Breast epithelium (tissue), 4 donors: ENCODE measurements at regions of chrX and their contacts with region 1.

Region 1: GRCh38 chrX:25383196-25383595 is 367.4 kb upstream of the ARX start:
- DNase-seq: no peak
- H3K4me3 ChIP-seq: no peak overlapping the region
- H3K27ac ChIP-seq: no peak overlapping the region
- H3K4me1 ChIP-seq: no peaks in the 10 kb centered on the region
- H3K27me3 ChIP-seq: peaks cover 0 to 7% of the 10 kb centered on the region in 2 donors
- CTCF ChIP-seq: no peak
- POLR2A ChIP-seq: no peak

Region 2: DNA sequence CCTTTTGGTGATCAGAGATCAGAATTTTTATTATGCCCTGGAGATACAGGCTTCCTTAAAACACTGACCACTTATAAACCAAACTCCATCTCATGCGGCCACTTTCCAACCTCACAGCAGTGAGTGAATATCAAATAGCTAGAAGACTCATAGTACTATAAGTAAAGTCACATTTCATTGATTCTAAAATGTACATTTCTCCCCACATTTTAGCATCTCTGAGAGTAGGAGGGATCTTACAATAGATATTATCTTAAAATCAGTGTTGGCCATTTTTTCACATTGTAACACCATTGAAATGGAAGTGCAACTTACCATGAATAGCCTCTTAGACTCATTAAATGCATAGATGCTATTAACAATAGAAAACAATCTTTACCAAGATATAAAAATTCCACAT is 753.5 kb before region 1 on chrX:
- intact Hi-C with region 1: loop called (anchors 10 kb)
- DNase-seq: no peak
- H3K4me3 ChIP-seq: no peak overlapping the region
- H3K27ac ChIP-seq: no peak overlapping the region
- H3K4me1 ChIP-seq: no peaks in the 10 kb centered on the region
- H3K27me3 ChIP-seq: peaks cover 0 to 18% of the 10 kb centered on the region in 2 donors
- CTCF ChIP-seq: no peak
- POLR2A ChIP-seq: no peak

Region 3: GRCh38 chrX:25427873-25428555 is 44.8 kb after region 1 on chrX:
- intact Hi-C with region 1: no loop called
- DNase-seq: no peak
- H3K4me3 ChIP-seq: no peak overlapping the region
- H3K27ac ChIP-seq: no peak overlapping the region
- H3K4me1 ChIP-seq: no peaks in the 10 kb centered on the region
- H3K27me3 ChIP-seq: peaks cover 0 to 5% of the 10 kb centered on the region in 2 donors
- CTCF ChIP-seq: no peak
- POLR2A ChIP-seq: no peak